ENCODE measurements at regions of chr1 and their contacts with region 1.

Region 1: DNA sequence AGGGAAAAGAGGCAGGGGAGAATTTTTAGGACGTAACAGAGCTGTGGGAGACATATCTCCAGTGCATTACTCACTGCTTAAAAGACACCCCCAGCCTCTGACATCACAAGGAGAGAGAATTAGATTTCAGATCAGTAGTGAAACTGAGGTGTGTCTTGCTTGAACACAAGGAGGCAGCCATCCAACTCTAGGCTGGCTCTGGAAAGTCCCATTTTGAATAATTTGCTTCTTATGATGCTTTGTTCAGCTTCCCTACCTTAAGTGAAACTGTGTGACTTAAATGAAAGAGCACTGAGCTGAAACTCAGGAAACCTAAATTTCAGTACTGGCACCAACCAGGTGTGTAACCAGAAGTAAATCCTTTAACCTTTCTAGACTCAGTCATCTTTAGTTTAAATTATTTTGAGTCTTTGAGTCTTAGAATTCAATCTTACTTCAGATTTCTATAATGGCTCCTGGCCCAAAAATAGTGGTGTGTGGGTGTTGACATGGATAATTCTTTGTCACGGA is 251.6 kb upstream of the SGIP1 start:
- DNase-seq: peak; percentile 81
- ATAC-seq: peak; percentile 89
- H3K4me3 Mint-ChIP-seq: no peak overlapping the region
- H3K27ac Mint-ChIP-seq: peak overlapping the region; percentile 70
- H3K4me1 Mint-ChIP-seq: peaks cover 95% of the 10 kb centered on the region
- H3K27me3 Mint-ChIP-seq: no peaks in the 10 kb centered on the region

Region 2: GRCh38 chr1:66300972-66301451 is 18.6 kb after region 1 on chr1:
- CTCF ChIA-PET with region 1: interaction called, 13 read pairs
- DNase-seq: peak; percentile 73
- ATAC-seq: peak; percentile 93
- H3K4me3 Mint-ChIP-seq: peak overlapping the region; percentile 66
- H3K27ac Mint-ChIP-seq: peak overlapping the region; percentile 89
- H3K4me1 Mint-ChIP-seq: peaks cover 39% of the 10 kb centered on the region
- H3K27me3 Mint-ChIP-seq: no peaks in the 10 kb centered on the region

Measured in activated CD8-positive, alpha-beta memory T cell treated with anti-CD3 and anti-CD28 coated beads, Interleukin-2, amount 10 ng/mL, durations not matched to agents 7 days and 5 days (primary cell).